ENCODE measurements at regions of chr14 and their contacts with region 1.

Region 1: DNA sequence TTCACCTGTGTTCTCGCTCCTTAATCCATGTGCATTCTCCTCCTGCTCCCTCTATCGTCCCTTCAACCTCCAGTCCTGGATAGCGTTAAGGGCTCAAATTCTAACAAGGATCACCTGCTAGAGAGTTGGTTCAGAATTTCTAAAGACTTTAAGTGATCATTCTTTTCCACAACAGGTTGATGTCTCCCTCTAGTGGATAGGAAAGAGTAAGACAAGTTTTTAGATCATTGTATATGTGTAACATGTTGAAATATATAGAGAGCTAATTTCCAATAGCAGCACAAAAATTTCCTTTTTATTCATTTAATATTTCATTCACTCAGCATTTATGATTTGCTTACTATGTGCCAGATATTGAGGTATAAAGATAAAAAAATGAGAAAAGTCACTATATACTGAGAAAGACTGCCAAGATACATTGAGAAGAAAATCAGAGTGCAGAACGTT is 9.3 kb upstream of the ESR2 start:
- DNase-seq: peak; percentile 77
- CTCF ChIP-seq: peak; percentile 70

Region 2: GRCh38 chr14:63248211-63248610 is 1055.3 kb before region 1 on chr14:
- CTCF ChIA-PET with region 1: no interaction called
- POLR2A ChIA-PET with region 1: no interaction called
- DNase-seq: no peak
- CTCF ChIP-seq: no peak

Region 3: GRCh38 chr14:63800651-63801375 is 502.7 kb before region 1 on chr14:
- CTCF ChIA-PET with region 1: interaction called, 65 read pairs
- POLR2A ChIA-PET with region 1: no interaction called
- DNase-seq: no peak
- CTCF ChIP-seq: no peak

Region 4: GRCh38 chr14:64098120-64098519 is 205.4 kb before region 1 on chr14:
- CTCF ChIA-PET with region 1: no interaction called
- POLR2A ChIA-PET with region 1: no interaction called
- DNase-seq: no peak
- CTCF ChIP-seq: no peak

Region 5: GRCh38 chr14:64137657-64138290 is 165.7 kb before region 1 on chr14:
- CTCF ChIA-PET with region 1: interaction called, 20 read pairs
- POLR2A ChIA-PET with region 1: no interaction called
- DNase-seq: no peak
- CTCF ChIP-seq: peak; percentile 15

Region 6: DNA sequence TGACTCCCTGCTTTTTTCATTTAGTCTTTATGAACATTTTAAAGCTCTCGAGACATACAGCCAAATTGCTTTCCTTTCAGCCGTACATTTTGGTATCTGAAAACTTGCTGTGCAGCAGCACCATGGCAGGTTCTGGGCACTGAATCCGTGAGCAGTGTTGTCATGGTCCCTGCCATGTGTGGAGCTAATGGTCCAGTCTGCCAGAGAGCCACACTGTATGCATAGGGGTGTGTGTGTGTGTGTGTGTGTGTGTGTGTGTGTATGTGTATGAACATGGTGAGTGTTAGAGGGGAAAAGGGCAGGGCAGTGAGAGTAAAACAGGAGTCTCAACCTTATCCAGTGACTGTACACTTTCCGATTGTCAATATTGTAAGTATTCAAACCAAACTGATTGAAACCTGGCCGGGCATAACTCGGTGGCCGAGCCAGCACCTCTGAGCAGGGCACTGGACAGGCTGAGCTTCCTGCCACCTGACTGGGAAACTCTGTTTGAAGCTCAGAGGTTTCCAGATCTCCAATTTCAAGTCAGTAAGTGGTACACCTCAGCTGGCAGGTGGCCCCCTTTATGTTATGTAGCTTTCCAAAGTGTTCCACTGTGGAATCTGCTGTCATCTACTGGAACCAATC is 119.3 kb before region 1 on chr14:
- CTCF ChIA-PET with region 1: no interaction called
- POLR2A ChIA-PET with region 1: no interaction called
- DNase-seq: no peak
- CTCF ChIP-seq: no peak

Region 7: DNA sequence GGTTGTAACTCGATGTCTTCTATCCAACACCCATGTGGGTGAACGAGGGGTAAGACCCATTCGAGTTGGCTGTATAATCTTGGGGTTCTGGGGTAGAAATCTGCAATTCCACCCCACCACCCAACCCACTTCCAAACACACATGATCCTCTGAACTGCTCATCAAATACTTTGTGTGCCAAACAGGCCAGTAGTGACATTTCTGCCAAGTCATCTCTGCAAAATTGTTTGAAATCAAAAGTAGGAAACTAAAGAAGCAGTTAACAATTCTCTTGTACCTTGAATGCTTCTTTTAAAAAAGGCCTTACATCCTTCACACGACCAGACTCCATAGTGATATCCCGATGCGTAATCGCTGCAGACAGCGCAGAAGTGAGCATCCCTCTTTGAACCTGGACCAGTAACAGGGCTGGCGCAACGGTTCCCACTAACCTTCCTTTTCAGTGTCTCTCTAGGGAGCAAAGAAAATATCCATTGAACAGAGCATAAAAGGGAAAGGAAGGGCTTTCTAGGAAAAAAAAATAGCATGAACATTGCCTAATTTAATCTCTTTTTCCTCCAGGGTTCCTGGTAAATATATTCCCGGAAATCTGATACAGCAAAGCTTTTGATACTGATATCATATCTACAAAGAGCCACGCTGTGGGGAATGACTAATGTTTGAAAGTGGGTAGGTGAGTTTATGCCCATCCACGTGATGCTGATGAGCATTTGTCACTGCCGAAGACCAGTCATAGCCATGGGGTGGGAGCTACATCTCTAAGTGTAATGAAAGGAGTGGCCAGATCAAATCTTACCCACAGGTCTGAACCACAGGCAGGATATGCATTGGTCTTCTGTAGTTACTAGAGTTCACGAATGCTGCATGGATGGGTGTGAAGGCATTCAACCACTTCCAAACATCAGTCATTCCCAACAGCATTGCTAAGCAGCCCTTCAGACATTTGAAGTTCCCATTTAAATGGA is 23.5 kb before region 1 on chr14:
- CTCF ChIA-PET with region 1: interaction called, 11 read pairs
- POLR2A ChIA-PET with region 1: no interaction called
- DNase-seq: no peak
- CTCF ChIP-seq: no peak

Region 8: GRCh38 chr14:64324895-64325294 is 21.4 kb after region 1 on chr14:
- CTCF ChIA-PET with region 1: interaction called, 10 read pairs
- POLR2A ChIA-PET with region 1: no interaction called
- DNase-seq: no peak
- CTCF ChIP-seq: no peak

Region 9: DNA sequence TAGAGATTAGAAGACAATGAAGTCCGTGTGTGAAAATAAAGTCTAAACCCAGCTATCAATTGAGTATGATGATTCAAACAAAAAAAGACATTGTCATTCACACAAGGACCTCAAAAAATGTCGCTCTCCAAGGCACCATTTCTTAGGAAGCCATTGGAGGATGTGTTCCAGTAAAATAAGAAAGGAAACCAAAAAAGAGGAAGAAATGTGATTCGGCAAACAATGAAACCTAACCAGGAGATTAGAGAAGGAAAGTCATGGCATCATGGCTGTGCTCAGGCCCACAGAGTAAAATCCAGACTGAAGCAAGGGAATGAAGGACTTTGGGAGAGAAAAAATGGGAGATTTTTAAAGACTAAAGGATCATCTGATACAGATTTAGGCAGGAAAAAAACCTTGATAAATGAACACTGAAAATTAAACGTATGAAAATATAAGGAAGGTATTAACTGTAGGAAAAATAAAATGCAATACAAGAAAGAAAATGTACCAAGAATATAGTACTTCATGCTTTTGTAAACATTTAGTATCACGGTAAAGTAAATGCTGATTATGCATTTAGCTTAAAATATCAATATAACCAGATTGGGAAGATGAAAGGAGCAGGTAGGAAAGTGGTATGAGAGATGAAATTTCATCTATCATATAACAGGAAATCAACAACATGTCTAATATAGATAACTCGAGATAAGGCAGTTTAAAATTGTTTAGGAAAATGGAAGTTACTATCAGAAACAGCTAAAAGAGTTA is 46.4 kb after region 1 on chr14:
- CTCF ChIA-PET with region 1: no interaction called
- POLR2A ChIA-PET with region 1: no interaction called
- DNase-seq: no peak
- CTCF ChIP-seq: no peak